ENCODE measurements at regions of chr1 and their contacts with region 1.

Region 1: DNA sequence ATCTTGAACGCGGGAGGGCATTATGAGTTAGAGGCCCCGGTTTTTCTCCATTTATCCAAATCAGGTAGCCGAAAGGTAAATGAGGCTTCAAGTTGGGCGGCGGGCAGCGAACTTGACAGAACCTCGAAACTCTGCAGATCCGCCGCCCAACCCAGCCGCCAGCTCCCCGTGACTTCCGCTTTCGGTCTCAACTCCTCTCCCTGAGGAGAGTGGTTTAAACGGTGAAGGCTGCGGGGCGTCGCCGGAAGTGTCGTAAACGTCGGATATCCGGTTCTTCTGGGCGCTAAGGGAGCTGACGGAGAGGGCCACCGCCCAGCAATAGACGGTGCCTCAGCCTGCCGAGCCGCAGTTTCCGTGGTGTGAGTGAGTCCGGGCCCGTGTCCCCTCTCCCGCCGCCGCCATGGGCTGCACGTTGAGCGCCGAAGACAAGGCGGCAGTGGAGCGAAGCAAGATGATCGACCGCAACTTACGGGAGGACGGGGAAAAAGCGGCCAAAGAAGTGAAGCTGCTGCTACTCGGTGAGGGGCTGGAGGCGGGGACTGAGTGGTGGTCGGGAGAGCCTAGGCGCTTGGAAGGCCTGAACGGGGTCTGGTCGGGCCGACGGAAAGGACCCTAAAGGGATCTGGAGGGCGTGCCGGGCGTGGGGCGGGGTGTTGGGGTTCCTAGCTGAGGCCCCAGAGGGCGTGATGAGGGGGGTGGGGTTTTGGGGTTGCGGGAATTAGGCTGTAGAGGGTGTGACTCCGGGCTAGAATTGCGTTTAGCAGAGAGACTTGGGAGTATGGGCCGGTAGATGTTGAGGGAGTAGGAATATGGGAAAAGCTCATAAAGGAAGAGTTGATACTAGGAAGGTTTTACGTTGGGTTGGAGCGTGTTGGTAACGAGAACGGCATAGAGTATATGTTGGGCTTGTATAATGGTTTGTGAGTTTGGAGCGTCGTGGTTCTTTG is at the start of gene GNAI3:
- DNase-seq: peak; percentile 93
- ATAC-seq: peak; percentile 90
- H3K4me3 Mint-ChIP-seq: peak within 1 kb of the TSS; percentile 100
- H3K27ac Mint-ChIP-seq: peak within 1 kb of the TSS; percentile 99
- H3K4me1 Mint-ChIP-seq: peaks cover 56% of the 10 kb centered on the region
- H3K27me3 Mint-ChIP-seq: no peaks in the 10 kb centered on the region
- CTCF ChIP-seq: no peak
- total RNA-seq, gene GNAI3: 7.5 and 8.4 TPM in 2 replicates

Region 2: GRCh38 chr1:109041621-109042468 is 506.7 kb before region 1 on chr1 and contains the start of gene WDR47:
- CTCF ChIA-PET with region 1: no interaction called
- POLR2A ChIA-PET with region 1: interaction called, 3 read pairs
- intact Hi-C with region 1: loop called (anchors 5 kb)
- DNase-seq: peak; percentile 89
- ATAC-seq: peak; percentile 96
- H3K4me3 Mint-ChIP-seq: peak within 1 kb of the TSS; percentile 88
- H3K27ac Mint-ChIP-seq: peak within 1 kb of the TSS; percentile 60
- H3K4me1 Mint-ChIP-seq: peaks cover 15% of the 10 kb centered on the region
- H3K27me3 Mint-ChIP-seq: no peaks in the 10 kb centered on the region
- CTCF ChIP-seq: no peak
- total RNA-seq, gene WDR47: 10.3 and 10.9 TPM in 2 replicates

Region 3: GRCh38 chr1:109441069-109441468 is 107.5 kb before region 1 on chr1:
- CTCF ChIA-PET with region 1: no interaction called
- POLR2A ChIA-PET with region 1: no interaction called
- intact Hi-C with region 1: no loop called
- DNase-seq: no peak
- ATAC-seq: no peak
- H3K4me3 Mint-ChIP-seq: no peak overlapping the region
- H3K27ac Mint-ChIP-seq: no peak overlapping the region
- H3K4me1 Mint-ChIP-seq: no peaks in the 10 kb centered on the region
- H3K27me3 Mint-ChIP-seq: peaks cover 10% of the 10 kb centered on the region
- CTCF ChIP-seq: no peak

Region 4: DNA sequence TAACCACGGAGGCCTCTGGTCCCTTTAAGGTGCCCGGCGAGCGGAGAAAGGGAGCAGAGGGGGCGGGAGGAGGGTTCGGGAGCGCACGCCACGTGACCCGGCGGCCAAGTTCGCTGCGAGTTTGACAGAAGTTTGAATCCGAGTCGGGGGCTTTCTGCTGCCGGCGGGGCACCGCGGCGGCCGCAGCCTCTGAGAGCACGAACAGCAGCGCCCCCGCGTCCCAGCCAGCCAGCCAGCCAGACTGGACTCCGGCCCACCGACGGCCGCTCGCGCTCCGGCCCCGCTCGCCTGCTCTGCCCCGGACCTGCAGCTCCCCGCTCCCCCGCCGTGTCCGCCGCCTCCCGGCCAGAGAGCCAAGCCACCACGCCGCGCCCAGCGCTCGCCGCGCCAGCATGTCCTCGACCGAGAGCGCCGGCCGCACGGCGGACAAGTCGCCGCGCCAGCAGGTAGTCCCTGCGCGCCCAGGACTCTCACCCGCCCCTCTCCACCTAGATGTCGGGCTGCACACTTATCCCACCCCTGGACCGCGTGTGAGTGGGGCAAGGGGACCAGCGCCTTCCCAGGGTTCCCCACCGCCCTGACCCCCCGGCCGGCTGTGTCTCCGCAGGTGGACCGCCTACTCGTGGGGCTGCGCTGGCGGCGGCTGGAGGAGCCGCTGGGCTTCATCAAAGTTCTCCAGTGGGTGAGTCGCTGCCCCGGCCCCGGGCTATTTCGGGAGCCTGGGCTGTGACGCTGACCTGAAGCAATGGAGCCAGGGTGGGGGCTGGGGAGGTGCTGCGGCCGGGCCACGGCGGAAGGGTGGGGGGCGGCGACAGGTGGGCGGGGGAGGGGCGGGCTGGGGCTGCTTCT is 81.9 kb before region 1 on chr1 and contains the start of gene SYPL2:
- CTCF ChIA-PET with region 1: no interaction called
- POLR2A ChIA-PET with region 1: no interaction called
- intact Hi-C with region 1: no loop called
- DNase-seq: peak; percentile 31
- ATAC-seq: peak; percentile 40
- H3K4me3 Mint-ChIP-seq: peak within 1 kb of the TSS; percentile 48
- H3K27ac Mint-ChIP-seq: no peak within 1 kb of the TSS
- H3K4me1 Mint-ChIP-seq: peaks cover 5% of the 10 kb centered on the region
- H3K27me3 Mint-ChIP-seq: peaks cover 58% of the 10 kb centered on the region
- CTCF ChIP-seq: no peak
- total RNA-seq, gene SYPL2: not detected in 2 replicates

Region 5: GRCh38 chr1:109509176-109510134 is 39.1 kb before region 1 on chr1 and contains the start of gene AMIGO1:
- CTCF ChIA-PET with region 1: no interaction called
- POLR2A ChIA-PET with region 1: no interaction called
- intact Hi-C with region 1: no loop called
- DNase-seq: peak; percentile 63
- ATAC-seq: peak; percentile 80
- H3K4me3 Mint-ChIP-seq: peak within 1 kb of the TSS; percentile 87
- H3K27ac Mint-ChIP-seq: peak within 1 kb of the TSS; percentile 43
- H3K4me1 Mint-ChIP-seq: peaks cover 15% of the 10 kb centered on the region
- H3K27me3 Mint-ChIP-seq: peaks cover 10% of the 10 kb centered on the region
- CTCF ChIP-seq: no peak
- total RNA-seq, gene AMIGO1: 0.42 and 0.53 TPM in 2 replicates

Region 6: GRCh38 chr1:109532365-109533136 is 16.0 kb before region 1 on chr1:
- CTCF ChIA-PET with region 1: interaction called, 15 read pairs
- POLR2A ChIA-PET with region 1: interaction called, 15 read pairs
- intact Hi-C with region 1: no loop called
- DNase-seq: peak; percentile 82
- ATAC-seq: peak; percentile 93
- H3K4me3 Mint-ChIP-seq: peak overlapping the region; percentile 77
- H3K27ac Mint-ChIP-seq: peak overlapping the region; percentile 74
- H3K4me1 Mint-ChIP-seq: peaks cover 8% of the 10 kb centered on the region
- H3K27me3 Mint-ChIP-seq: no peaks in the 10 kb centered on the region
- CTCF ChIP-seq: no peak

Region 7: DNA sequence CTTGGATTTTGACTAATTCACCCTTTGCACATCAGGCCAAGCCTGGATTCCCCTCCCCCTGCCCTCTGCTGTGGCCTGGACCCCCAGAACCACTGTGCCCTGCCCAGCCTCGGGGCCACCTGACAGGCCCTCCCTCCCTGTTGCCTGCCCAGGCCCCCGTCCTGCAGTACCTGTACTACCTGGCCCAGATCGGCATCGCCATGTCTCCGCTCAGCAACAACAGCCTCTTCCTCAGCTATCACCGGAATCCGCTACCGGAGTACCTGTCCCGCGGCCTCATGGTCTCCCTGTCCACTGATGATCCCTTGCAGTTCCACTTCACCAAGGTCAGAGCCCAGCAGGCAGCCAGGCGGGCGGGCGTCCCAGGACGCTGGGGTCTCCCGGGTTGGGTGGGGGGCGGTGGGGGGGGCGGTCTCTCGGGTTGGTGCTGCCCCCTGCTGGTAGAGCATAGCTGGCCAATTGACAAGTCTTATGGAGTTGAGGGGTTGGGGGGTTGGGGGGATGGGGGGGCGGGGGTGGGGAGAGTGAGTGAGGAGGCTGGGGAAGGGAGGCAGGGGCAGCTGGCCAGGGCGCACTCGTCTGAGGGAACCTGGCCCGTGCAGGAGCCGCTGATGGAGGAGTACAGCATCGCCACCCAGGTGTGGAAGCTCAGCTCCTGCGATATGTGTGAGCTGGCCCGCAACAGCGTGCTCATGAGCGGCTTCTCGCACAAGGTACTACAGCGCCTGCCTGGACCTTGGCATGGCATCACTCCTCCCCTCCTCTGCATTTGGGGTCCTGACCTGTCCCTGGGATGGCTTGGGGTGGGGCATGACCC is 81.7 kb after region 1 on chr1:
- CTCF ChIA-PET with region 1: interaction called, 45 read pairs
- POLR2A ChIA-PET with region 1: interaction called, 18 read pairs
- intact Hi-C with region 1: loop called (anchors 1 kb)
- DNase-seq: no peak
- ATAC-seq: no peak
- H3K4me3 Mint-ChIP-seq: no peak overlapping the region
- H3K27ac Mint-ChIP-seq: no peak overlapping the region
- H3K4me1 Mint-ChIP-seq: peaks cover 16% of the 10 kb centered on the region
- H3K27me3 Mint-ChIP-seq: no peaks in the 10 kb centered on the region
- CTCF ChIP-seq: no peak

Region 8: DNA sequence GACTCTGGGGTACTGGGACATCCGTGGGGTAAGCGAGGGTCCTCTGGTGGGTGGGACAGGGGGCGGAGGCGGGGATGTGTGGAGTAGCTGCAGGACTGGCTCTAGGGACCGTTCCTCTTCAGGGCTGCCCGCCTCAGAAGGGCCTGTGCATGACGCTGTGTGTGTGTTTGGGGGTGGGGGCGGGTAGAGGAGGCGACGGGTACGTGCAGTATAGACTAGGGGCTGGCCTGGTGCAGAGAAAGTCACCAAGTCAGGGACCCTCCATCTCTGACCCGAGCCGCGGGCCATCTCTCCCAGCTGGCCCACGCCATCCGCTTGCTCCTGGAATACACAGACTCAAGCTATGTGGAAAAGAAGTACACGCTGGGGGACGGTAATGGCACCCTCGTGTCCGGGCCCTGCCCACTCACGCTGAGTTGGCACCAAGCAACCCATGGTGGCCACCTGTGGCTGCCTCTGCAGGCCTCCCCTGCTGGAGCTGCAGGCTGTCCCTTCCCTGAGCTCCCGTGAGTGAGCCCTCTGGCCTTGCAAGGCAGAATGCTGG is 163.8 kb after region 1 on chr1:
- CTCF ChIA-PET with region 1: no interaction called
- POLR2A ChIA-PET with region 1: no interaction called
- intact Hi-C with region 1: no loop called
- DNase-seq: no peak
- ATAC-seq: no peak
- H3K4me3 Mint-ChIP-seq: peak overlapping the region; percentile 82
- H3K27ac Mint-ChIP-seq: no peak overlapping the region
- H3K4me1 Mint-ChIP-seq: peaks cover 1% of the 10 kb centered on the region
- H3K27me3 Mint-ChIP-seq: peaks cover 17% of the 10 kb centered on the region
- CTCF ChIP-seq: no peak

Region 9: GRCh38 chr1:109739738-109740660 is 191.4 kb after region 1 on chr1:
- CTCF ChIA-PET with region 1: no interaction called
- POLR2A ChIA-PET with region 1: interaction called, 3 read pairs
- intact Hi-C with region 1: loop called (anchors 1 kb)
- DNase-seq: peak; percentile 72
- ATAC-seq: peak; percentile 97
- H3K4me3 Mint-ChIP-seq: peak overlapping the region; percentile 82
- H3K27ac Mint-ChIP-seq: no peak overlapping the region
- H3K4me1 Mint-ChIP-seq: peaks cover 13% of the 10 kb centered on the region
- H3K27me3 Mint-ChIP-seq: peaks cover 24% of the 10 kb centered on the region
- CTCF ChIP-seq: no peak

Region 10: DNA sequence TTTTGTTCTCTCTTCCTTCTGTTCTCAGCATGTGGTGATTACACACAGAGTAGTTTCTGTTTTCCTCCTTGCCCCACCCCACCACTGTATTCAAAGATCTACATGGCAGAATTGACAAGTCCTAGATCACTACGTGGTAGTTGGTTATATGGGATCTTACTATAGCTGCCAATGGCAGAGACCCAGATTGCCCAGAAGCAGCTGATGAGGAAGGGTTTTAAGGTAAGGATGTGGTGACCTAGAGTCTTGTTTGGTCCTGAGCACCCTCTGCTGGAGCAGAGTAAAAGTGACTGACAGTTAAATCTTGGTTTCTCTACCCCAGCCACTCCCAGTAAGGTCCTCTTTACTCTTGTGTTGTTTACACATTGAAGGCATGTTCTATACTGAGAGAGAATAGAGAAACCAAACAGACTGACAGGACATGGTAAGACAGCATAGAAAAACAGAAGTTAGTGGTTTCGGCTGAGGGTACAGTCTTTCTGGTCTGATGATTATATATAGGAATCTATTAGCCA is 463.0 kb after region 1 on chr1:
- CTCF ChIA-PET with region 1: interaction called, 11 read pairs
- POLR2A ChIA-PET with region 1: interaction called, 7 read pairs
- intact Hi-C with region 1: loop called (anchors 1 kb)
- DNase-seq: no peak
- ATAC-seq: peak; percentile 90
- H3K4me3 Mint-ChIP-seq: peak overlapping the region; percentile 75
- H3K27ac Mint-ChIP-seq: peak overlapping the region; percentile 99
- H3K4me1 Mint-ChIP-seq: peaks cover 37% of the 10 kb centered on the region
- H3K27me3 Mint-ChIP-seq: no peaks in the 10 kb centered on the region
- CTCF ChIP-seq: peak; percentile 55